Activated naive CD4-positive, alpha-beta T cell treated with anti-CD3 and anti-CD28 coated beads for 36 hours (primary cell): ENCODE measurements at regions of chr7 and their contacts with region 1.

Region 1: GRCh38 chr7:105759670-105760550 is 116.5 kb downstream of the ATXN7L1 start:
- DNase-seq: peak; percentile 48
- H3K4me3 Mint-ChIP-seq: no peak overlapping the region
- H3K27ac Mint-ChIP-seq: no peak overlapping the region
- H3K4me1 Mint-ChIP-seq: peaks cover 28% of the 10 kb centered on the region
- H3K27me3 Mint-ChIP-seq: no peaks in the 10 kb centered on the region

Region 2: GRCh38 chr7:105678811-105679495 is 81.0 kb before region 1 on chr7:
- CTCF ChIA-PET with region 1: interaction called, 5 read pairs
- intact Hi-C with region 1: loop called (anchors 5 kb)
- DNase-seq: peak; percentile 60
- H3K4me3 Mint-ChIP-seq: peak overlapping the region; percentile 82
- H3K27ac Mint-ChIP-seq: peak overlapping the region; percentile 86
- H3K4me1 Mint-ChIP-seq: peaks cover 59% of the 10 kb centered on the region
- H3K27me3 Mint-ChIP-seq: no peaks in the 10 kb centered on the region

Region 3: DNA sequence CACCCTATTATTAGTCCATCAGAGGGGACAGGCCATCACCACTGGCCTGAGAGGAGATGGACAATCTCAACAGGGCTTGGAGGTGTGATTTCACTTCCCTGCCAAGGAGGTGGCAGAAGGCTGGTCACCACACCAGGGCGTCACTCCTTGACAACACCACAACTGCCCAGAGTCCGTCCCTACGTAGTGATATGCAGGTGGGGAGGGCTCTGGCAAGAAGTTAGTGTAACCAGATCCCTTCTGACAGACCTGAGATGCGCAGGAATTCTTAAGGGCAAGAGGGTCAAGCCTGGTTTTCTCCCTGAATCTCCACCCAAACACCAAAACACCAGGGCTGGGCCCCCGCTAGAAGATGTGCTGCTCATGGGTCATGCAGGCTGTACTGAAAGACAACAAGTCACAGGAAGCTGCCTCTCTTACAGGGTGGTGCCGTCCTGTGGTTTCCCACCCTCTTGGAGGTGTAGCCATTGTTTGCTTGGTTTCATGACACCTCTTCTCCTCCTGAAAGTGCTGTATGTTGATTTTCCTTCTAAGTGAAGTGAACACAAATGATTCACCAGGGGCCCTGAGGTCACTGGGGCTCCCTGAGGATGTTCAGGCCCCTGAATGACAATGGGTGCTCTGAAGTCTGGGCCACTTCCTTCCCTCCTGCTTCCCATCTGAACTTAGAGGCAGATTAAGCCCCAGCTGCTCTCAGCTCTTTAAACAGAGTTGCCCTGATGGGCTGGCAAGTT is 89.4 kb after region 1 on chr7:
- CTCF ChIA-PET with region 1: interaction called, 10 read pairs
- intact Hi-C with region 1: no loop called
- DNase-seq: peak; percentile 83
- H3K4me3 Mint-ChIP-seq: no peak overlapping the region
- H3K27ac Mint-ChIP-seq: no peak overlapping the region
- H3K4me1 Mint-ChIP-seq: peaks cover 44% of the 10 kb centered on the region
- H3K27me3 Mint-ChIP-seq: no peaks in the 10 kb centered on the region

Region 4: DNA sequence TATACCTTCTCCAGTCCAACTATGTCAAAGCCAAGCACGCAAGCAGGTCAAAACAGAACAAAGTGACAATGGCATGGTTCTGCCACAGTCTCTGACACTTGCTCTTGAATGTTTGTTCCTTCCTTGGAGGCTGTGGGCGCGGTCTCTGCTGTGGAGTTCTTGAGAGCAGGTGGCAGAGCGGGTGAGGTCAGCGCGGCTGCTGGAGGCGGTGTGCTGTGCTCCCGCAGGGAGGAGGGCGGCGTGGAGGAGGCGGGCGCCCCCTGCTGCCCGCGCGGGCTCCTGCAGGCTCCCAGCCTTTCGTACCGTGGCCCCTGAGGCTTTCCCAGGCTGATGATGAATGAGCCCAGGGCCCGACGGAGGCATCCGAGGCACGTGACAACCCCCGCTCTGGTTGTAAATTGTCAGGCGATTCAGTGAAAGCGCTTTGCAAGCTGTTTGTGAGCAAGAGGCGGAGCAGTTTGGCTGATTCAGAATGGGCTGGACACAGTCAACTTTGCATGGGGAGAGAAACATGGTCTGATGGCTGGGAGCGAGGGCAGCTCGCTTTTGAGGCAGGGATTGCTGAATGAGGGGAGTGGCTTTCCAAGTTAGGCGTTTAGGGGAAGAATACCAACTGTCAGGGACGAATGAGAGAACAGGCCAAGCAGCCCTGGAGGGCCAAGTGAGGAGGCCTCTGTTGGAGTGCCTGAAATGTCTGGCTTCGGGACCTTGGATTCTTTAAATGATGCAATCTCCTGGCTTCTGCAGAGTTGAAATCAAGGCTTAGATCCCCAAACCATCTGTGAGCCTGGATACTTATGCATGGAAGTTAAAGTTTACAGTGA is 249.7 kb after region 1 on chr7:
- CTCF ChIA-PET with region 1: interaction called, 36 read pairs
- intact Hi-C with region 1: loop called (anchors 1 kb)
- DNase-seq: peak; percentile 89
- H3K4me3 Mint-ChIP-seq: no peak overlapping the region
- H3K27ac Mint-ChIP-seq: no peak overlapping the region
- H3K4me1 Mint-ChIP-seq: peaks cover 22% of the 10 kb centered on the region
- H3K27me3 Mint-ChIP-seq: no peaks in the 10 kb centered on the region

Region 5: GRCh38 chr7:106041140-106041717 is 281.3 kb after region 1 on chr7:
- CTCF ChIA-PET with region 1: interaction called, 77 read pairs
- intact Hi-C with region 1: loop called (anchors 1 kb)
- DNase-seq: peak; percentile 53
- H3K4me3 Mint-ChIP-seq: no peak overlapping the region
- H3K27ac Mint-ChIP-seq: no peak overlapping the region
- H3K4me1 Mint-ChIP-seq: peaks cover 27% of the 10 kb centered on the region
- H3K27me3 Mint-ChIP-seq: peaks cover 2% of the 10 kb centered on the region

Region 6: GRCh38 chr7:106056513-106057203 is 296.7 kb after region 1 on chr7:
- CTCF ChIA-PET with region 1: no interaction called
- intact Hi-C with region 1: no loop called
- DNase-seq: peak; percentile 84
- H3K4me3 Mint-ChIP-seq: no peak overlapping the region
- H3K27ac Mint-ChIP-seq: no peak overlapping the region
- H3K4me1 Mint-ChIP-seq: peaks cover 16% of the 10 kb centered on the region
- H3K27me3 Mint-ChIP-seq: no peaks in the 10 kb centered on the region